ENCODE measurements at regions of chr4 and their contacts with region 1.

Region 1: GRCh38 chr4:186037692-186038658 is 31.0 kb upstream of the TLR3 start:
- DNase-seq: peak; percentile 85
- H3K4me3 ChIP-seq: no peak overlapping the region
- H3K27ac ChIP-seq: no peak overlapping the region
- H3K4me1 ChIP-seq: no peaks in the 10 kb centered on the region
- H3K27me3 ChIP-seq: peaks cover 3 to 5% of the 10 kb centered on the region in 2 experiments
- CTCF ChIP-seq: peak; percentile 55 to 59
- POLR2A ChIP-seq: no peak

Region 2: DNA sequence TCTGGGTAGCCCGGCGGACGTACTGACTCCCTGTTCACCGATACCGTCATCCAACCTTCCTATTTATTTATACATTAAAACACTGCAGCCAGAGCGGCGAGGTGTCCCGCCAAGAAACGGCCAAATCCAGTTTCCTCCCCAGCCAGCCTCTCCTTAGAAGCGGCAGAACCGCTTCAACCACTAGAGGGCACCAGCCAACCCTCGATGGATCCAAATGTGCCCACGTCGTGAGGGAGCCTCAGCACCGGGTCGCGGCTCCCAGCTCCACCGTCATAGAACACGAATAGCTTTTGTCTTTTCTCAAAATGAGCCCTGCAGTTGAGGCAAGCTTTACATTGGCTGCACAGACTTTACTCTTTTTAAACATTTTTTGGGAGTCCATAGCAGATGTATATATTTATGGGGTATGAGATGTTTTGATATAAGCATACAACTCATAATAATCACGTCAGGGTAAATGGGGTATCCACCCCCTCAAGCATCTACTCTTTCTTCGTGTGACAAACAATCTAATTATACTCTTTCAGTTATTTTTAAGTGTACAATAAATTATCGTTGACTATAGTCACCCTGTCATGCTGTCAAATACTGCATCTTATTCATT is 1032.7 kb before region 1 on chr4:
- CTCF ChIA-PET with region 1: interaction called, 23 read pairs
- POLR2A ChIA-PET with region 1: no interaction called
- dilution Hi-C with region 1: no loop called
- intact Hi-C with region 1: loop called (anchors 1 kb)
- DNase-seq: peak; percentile 68
- H3K4me3 ChIP-seq: no peak overlapping the region
- H3K27ac ChIP-seq: no peak overlapping the region
- H3K4me1 ChIP-seq: no peaks in the 10 kb centered on the region
- H3K27me3 ChIP-seq: peaks cover 0 to 8% of the 10 kb centered on the region in 2 experiments
- CTCF ChIP-seq: peak; percentile 94 to 96
- POLR2A ChIP-seq: no peak

Region 3: DNA sequence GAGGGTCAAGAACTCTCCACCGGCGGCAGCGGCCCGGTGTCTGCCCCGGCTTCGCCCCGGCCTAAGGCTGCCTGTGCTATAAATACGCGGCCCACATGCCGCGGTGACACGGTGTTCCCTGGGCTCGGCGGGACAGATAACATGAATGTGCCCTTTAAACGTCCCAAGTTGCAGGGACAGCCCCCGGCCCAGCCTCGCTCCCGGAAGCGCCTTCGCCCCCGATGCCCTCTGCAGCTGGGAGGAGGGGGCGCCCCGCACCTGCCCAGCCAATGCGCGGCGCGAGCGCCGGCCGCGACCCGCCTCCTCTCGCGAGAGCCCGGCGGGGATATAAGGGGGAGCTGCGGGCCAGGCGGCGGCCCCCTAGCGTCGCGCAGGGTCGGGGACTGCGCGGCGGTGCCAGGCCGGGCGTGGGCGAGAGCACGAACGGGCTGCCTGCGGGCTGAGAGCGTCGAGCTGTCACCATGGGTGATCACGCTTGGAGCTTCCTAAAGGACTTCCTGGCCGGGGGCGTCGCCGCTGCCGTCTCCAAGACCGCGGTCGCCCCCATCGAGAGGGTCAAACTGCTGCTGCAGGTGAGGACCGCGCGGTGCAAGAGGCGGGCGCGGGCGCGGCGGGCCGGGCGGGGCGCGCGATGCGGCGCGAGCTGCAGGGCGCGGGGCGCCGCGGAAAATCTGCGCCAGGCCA is 894.9 kb before region 1 on chr4 and contains the start of gene SLC25A4:
- CTCF ChIA-PET with region 1: interaction called, 4 read pairs
- POLR2A ChIA-PET with region 1: no interaction called
- dilution Hi-C with region 1: no loop called
- intact Hi-C with region 1: loop called (anchors 5 kb)
- DNase-seq: peak; percentile 77
- H3K4me3 ChIP-seq: peak within 1 kb of the TSS; percentile 52 to 75 (median 69)
- H3K27ac ChIP-seq: no peak within 1 kb of the TSS
- H3K4me1 ChIP-seq: peaks cover 12% of the 10 kb centered on the region
- H3K27me3 ChIP-seq: no peaks in the 10 kb centered on the region
- CTCF ChIP-seq: peak; percentile 43 to 62
- POLR2A ChIP-seq: peak; percentile 93
- total RNA-seq, gene SLC25A4: 13.7 and 13.9 TPM in 2 replicates

Region 4: DNA sequence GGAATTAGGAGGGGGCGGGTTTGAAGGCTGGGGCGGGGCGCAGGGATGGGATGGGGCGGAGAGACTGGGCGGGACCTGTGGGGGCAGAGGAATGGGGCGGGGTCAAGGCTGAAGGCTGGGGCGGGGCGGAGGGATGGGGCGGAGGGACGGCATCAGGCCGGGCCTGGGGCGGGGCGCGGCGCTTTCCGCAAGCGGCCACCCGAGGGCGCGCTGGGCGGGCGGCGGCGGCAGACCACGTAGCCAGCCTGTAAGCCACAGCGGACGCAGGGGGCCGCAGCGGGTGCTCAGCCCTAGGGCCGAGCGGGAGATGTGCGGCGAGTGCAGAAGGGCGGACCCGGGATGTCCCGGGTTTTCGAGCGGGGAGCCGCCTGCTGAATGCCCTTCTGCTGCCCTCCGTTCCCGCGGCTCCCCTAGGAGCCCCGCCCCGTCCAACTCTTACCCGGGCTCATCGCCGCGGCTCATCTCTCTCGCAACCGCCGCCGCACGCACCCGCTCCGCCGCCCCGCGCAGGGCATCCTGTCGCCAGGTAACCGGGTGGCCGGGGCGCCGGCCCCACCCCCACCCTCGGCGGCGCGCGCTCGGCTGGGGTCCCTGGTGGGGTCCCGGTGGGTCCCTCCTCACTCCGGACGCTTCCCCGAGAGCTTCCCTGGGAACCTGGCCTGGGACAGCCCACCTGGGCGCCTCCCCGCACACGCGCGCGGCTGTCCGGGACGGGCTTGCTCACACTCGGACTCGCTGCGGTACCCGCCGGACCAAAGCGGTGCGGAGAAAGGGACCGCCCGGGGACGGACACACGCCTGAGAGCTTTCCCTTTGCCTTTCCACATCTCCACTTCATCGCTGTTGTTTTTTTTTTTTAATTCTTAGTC is 566.5 kb before region 1 on chr4 and contains the start of gene CCDC110:
- CTCF ChIA-PET with region 1: interaction called, 20 read pairs
- POLR2A ChIA-PET with region 1: no interaction called
- dilution Hi-C with region 1: no loop called
- intact Hi-C with region 1: loop called (anchors 1 kb)
- DNase-seq: peak; percentile 90
- H3K4me3 ChIP-seq: peak within 1 kb of the TSS; percentile 43 to 80 (median 57)
- H3K27ac ChIP-seq: peak within 1 kb of the TSS; percentile 41
- H3K4me1 ChIP-seq: peaks cover 8% of the 10 kb centered on the region
- H3K27me3 ChIP-seq: peaks cover 15% of the 10 kb centered on the region in 2 experiments
- CTCF ChIP-seq: peak; percentile 32 to 57
- POLR2A ChIP-seq: no peak
- total RNA-seq, gene CCDC110: 0.28 and 0.71 TPM in 2 replicates

Region 5: GRCh38 chr4:185634066-185634652 is 403.8 kb before region 1 on chr4:
- CTCF ChIA-PET with region 1: interaction called, 211 read pairs
- POLR2A ChIA-PET with region 1: no interaction called
- dilution Hi-C with region 1: loop called (anchors 25 kb)
- intact Hi-C with region 1: no loop called
- DNase-seq: no peak
- H3K4me3 ChIP-seq: no peak overlapping the region
- H3K27ac ChIP-seq: no peak overlapping the region
- H3K4me1 ChIP-seq: no peaks in the 10 kb centered on the region
- H3K27me3 ChIP-seq: no peaks in the 10 kb centered on the region
- CTCF ChIP-seq: peak; percentile 27 to 38
- POLR2A ChIP-seq: no peak

Region 6: DNA sequence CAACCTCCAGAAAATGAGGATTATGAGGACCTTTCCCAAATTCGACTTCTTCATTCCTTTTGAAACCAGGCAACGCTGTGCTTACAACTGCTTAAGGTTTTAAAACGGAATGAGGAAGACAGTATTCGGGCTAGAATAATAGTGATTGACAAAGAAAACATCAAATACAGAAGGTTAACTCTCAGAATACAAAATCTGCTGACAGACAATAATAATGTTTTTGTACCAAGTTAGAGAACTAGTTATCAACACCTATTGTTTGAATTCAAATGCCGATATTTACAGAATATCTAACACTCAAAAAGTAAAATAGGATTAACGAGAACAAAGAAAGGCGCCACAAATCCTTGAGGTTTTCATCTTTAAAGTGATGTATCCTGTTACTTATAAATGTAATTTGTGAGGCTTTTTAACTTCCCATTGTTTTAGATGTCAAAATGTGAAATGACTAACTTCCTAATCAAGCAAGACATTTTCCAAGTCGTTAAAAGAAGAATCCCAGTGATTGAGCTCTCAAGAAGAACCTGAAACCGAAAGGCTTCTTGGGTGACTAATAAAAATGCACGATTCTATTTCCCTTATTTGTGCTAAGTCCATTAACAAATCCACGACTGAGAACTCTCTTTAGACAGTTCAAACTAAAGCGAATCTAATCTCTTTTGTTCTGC is 344.3 kb before region 1 on chr4:
- CTCF ChIA-PET with region 1: interaction called, 10 read pairs
- POLR2A ChIA-PET with region 1: no interaction called
- dilution Hi-C with region 1: no loop called
- intact Hi-C with region 1: no loop called
- DNase-seq: peak; percentile 90
- H3K4me3 ChIP-seq: peak overlapping the region; percentile 1 to 46 (median 9)
- H3K27ac ChIP-seq: peak overlapping the region; percentile 84
- H3K4me1 ChIP-seq: peaks cover 19% of the 10 kb centered on the region
- H3K27me3 ChIP-seq: no peaks in the 10 kb centered on the region
- CTCF ChIP-seq: no peak
- POLR2A ChIP-seq: peak; percentile 22

Region 7: GRCh38 chr4:186137196-186137794 is 99.3 kb after region 1 on chr4:
- CTCF ChIA-PET with region 1: interaction called, 12 read pairs
- POLR2A ChIA-PET with region 1: no interaction called
- dilution Hi-C with region 1: no loop called
- intact Hi-C with region 1: no loop called
- DNase-seq: peak; percentile 15
- H3K4me3 ChIP-seq: no peak overlapping the region
- H3K27ac ChIP-seq: no peak overlapping the region
- H3K4me1 ChIP-seq: no peaks in the 10 kb centered on the region
- H3K27me3 ChIP-seq: peaks cover 2 to 4% of the 10 kb centered on the region in 2 experiments
- CTCF ChIP-seq: peak; percentile 28 to 34
- POLR2A ChIP-seq: no peak

Region 8: DNA sequence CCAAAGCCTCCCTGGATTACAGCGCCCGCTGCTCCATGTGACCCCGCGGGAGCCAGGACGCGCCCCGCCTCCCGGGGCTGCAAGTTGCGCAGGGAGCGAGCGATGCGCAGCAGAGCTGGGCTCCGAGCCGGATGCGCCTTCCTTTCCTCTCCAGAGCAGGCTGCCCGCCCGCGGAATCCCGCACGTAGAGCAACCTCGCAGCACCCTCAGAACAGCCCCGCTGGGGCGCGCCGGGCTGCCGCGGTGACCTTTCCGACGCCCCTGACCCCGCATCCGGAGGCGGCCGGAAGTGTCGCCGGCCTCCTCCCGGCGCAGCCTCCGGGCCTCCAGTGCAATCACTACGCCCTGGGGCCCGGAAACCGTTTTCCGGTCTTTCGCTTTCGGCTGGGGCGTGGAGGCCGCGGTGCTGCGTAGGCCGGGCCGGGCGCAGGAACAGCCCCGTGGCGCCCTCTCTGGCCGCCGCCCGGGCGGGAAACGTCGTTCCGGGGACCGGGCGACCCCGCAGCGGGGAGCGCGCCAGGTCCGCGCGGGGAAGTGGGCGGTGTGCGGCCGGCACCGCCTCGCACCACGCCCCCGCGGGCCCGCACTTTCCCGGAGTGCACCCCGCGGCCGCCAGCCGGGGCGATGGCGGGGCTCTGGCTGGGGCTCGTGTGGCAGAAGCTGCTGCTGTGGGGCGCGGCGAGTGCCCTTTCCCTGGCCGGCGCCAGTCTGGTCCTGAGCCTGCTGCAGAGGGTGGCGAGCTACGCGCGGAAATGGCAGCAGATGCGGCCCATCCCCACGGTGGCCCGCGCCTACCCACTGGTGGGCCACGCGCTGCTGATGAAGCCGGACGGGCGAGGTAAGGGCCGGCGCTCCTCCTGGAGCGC is 153.5 kb after region 1 on chr4 and contains the start of gene CYP4V2:
- CTCF ChIA-PET with region 1: no interaction called
- POLR2A ChIA-PET with region 1: no interaction called
- dilution Hi-C with region 1: no loop called
- intact Hi-C with region 1: no loop called
- DNase-seq: peak; percentile 28
- H3K4me3 ChIP-seq: peak within 1 kb of the TSS; percentile 56 to 74 (median 68)
- H3K27ac ChIP-seq: no peak within 1 kb of the TSS
- H3K4me1 ChIP-seq: peaks cover 8% of the 10 kb centered on the region
- H3K27me3 ChIP-seq: peaks cover 4 to 6% of the 10 kb centered on the region in 2 experiments
- CTCF ChIP-seq: peak; percentile 24 to 31
- POLR2A ChIP-seq: no peak
- total RNA-seq, gene CYP4V2: 1.7 and 3.1 TPM in 2 replicates

Region 9: DNA sequence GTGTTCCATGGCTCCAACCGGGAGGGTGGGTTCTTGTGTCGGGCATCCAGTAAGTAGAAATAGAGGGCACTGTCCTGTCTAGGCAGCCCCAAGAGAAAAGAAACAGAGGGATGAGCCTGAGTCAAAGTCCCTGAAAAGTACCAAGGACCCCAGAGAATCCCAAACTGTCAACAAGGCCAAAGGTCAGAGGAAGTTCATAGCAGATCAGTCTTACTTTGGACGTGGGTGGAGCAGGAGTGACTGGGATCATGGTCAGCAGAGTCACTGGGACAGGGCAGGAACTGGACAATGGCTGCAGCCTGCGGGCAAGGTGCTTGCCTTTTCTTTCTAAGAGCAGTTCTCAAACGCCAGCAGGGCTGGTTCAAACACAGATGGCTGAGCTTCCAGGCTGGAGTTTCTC is 245.3 kb after region 1 on chr4:
- CTCF ChIA-PET with region 1: no interaction called
- POLR2A ChIA-PET with region 1: no interaction called
- dilution Hi-C with region 1: no loop called
- intact Hi-C with region 1: no loop called
- DNase-seq: no peak
- H3K4me3 ChIP-seq: no peak overlapping the region
- H3K27ac ChIP-seq: no peak overlapping the region
- H3K4me1 ChIP-seq: no peaks in the 10 kb centered on the region
- H3K27me3 ChIP-seq: no peaks in the 10 kb centered on the region
- CTCF ChIP-seq: no peak
- POLR2A ChIP-seq: no peak

Measured in endothelial cell of umbilical vein (primary cell).